ENCODE measurements at regions of chr6 and their contacts with region 1.

Region 1: GRCh38 chr6:127266178-127266891 is at the start of gene RNF146:
- DNase-seq: peak; percentile 77
- H3K4me3 Mint-ChIP-seq: peak within 1 kb of the TSS; percentile 93
- H3K27ac Mint-ChIP-seq: peak within 1 kb of the TSS; percentile 97
- H3K4me1 Mint-ChIP-seq: peaks cover 32% of the 10 kb centered on the region
- H3K27me3 Mint-ChIP-seq: peaks cover 1% of the 10 kb centered on the region
- total RNA-seq, gene RNF146: 15.4 to 20.3 TPM

Region 2: DNA sequence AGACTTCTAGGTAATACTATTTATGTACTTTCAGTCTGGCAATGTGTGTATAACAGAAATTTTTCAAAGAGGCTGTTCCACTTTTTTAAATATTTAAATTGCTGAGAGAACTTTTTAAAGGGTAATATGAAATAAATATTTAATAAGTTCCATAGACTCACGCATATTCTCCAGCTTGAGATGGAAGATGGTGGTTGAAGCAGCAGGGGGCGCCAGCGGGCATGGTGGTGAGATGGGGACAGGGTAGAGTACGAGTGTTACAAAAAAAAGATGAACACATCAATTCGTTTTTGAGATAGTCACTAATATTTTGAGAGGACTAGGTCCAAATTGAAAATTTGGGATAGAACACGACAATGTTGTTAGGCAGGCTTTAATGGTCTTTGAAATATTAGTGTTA is 79.4 kb before region 1 on chr6:
- CTCF ChIA-PET with region 1: interaction called, 41 read pairs
- POLR2A ChIA-PET with region 1: no interaction called
- intact Hi-C with region 1: loop called (anchors 1 kb)
- DNase-seq: peak; percentile 78
- H3K4me3 Mint-ChIP-seq: no peak overlapping the region
- H3K27ac Mint-ChIP-seq: no peak overlapping the region
- H3K4me1 Mint-ChIP-seq: no peaks in the 10 kb centered on the region
- H3K27me3 Mint-ChIP-seq: no peaks in the 10 kb centered on the region

Region 3: DNA sequence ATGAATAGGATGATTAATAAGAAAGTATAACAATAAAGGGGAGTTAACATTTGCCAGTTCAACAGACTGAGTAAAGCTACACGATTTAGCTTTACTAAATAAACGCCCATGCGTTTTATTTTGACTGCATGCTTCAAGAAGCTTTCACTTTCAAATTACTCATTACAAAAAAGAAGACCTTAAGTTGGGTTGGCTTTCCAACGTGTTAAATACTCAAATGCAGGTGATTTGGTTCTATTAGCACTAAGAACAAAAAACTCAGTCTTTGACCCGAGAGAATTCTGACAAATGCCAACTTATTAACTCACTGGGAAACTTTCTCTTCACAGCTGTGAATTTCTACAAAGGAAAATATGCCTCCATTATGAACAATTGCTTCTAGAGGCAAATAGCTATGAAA is 25.2 kb after region 1 on chr6:
- CTCF ChIA-PET with region 1: interaction called, 22 read pairs
- POLR2A ChIA-PET with region 1: interaction called, 12 read pairs
- intact Hi-C with region 1: loop called (anchors 1 kb)
- DNase-seq: no peak
- H3K4me3 Mint-ChIP-seq: no peak overlapping the region
- H3K27ac Mint-ChIP-seq: peak overlapping the region; percentile 49
- H3K4me1 Mint-ChIP-seq: peaks cover 45% of the 10 kb centered on the region
- H3K27me3 Mint-ChIP-seq: no peaks in the 10 kb centered on the region

Region 4: DNA sequence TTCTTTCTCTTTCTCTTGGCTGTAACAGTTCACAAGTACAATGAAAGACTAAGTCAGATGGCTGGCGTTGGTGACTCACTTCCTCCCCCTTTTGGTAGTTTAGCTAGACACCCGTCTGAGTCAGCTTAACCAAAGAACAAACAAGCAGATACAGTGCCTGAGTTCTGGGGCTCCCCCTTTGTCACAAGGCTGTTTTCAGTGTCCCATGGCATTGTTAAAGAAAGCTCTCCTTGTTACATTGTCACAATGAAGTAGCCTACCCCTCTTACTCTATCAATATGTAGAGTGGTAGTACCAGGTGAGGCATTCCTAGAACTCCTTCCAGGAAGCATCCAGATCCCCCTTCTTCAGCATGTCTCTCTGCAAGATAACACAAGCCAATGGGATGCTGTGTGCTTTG is 154.2 kb after region 1 on chr6:
- CTCF ChIA-PET with region 1: interaction called, 9 read pairs
- POLR2A ChIA-PET with region 1: interaction called, 3 read pairs
- intact Hi-C with region 1: loop called (anchors 1 kb)
- DNase-seq: peak; percentile 89
- H3K4me3 Mint-ChIP-seq: no peak overlapping the region
- H3K27ac Mint-ChIP-seq: peak overlapping the region; percentile 64
- H3K4me1 Mint-ChIP-seq: peaks cover 19% of the 10 kb centered on the region
- H3K27me3 Mint-ChIP-seq: peaks cover 1% of the 10 kb centered on the region

Region 5: DNA sequence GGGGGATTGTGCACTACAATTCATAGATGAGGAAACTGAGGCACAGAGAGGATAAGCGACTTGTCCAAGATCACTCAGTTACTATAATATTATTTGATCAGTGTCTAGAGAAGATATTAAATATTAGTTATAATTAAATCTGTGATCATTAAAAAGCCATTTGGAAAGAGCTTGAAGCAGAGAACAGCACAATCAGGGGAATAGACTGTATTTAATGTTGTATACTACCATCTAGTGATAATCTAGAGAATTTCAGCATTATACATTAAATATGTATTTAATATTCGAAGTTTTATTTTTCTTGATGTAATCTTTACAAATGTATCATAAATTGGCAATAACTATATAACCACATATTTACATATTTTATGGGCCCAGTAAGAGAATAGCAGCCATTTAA is 272.9 kb after region 1 on chr6:
- CTCF ChIA-PET with region 1: interaction called, 10 read pairs
- POLR2A ChIA-PET with region 1: no interaction called
- intact Hi-C with region 1: no loop called
- DNase-seq: no peak
- H3K4me3 Mint-ChIP-seq: no peak overlapping the region
- H3K27ac Mint-ChIP-seq: no peak overlapping the region
- H3K4me1 Mint-ChIP-seq: peaks cover 3% of the 10 kb centered on the region
- H3K27me3 Mint-ChIP-seq: peaks cover 13% of the 10 kb centered on the region